ENCODE measurements at regions of chr20 and their contacts with region 1.

Region 1: GRCh38 chr20:48422242-48422955 is 405.4 kb downstream of the PREX1 start:
- DNase-seq: no peak

Region 2: DNA sequence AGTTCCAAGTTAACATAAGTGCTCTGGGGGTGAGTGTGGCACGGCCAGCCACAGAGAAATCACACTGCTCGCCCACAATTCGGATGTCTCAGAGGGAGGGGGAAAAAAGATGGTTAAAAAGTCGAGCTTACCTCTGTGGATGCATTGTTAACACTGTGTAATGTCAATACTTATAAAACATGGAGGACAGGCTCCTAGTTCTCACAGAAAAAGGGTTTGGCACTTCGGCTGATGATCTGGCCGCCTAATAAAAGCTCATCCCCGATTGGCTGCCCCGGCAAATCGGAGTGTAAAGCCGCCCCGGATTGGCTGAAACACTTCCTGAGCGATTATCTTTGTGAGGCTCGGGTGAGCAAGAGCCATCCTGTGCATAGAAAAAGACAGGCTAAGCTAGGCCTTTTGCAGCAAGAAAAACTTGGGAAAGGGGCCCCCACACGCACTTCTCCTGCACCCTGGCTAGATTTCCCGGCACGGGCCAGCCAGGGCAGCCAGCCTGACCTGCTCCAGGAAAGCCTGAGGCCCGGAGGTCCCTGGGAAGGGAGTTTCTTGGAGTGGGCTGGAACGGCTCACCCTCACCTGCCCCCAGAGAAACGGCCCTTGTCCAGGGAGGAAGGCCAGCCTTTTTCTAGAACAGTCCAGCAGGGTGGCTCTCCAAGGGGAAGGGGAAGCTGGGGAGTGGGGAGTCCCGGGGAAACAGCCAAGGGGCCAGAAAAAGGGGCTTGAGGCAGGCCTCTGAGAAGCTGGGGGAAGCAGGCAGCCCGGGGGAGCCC is 1065.7 kb before region 1 on chr20 and contains the start of gene ZMYND8:
- intact Hi-C with region 1: no loop called
- DNase-seq: peak; percentile 96
- total RNA-seq, gene ZMYND8: 28.0 to 29.3 TPM

Region 3: DNA sequence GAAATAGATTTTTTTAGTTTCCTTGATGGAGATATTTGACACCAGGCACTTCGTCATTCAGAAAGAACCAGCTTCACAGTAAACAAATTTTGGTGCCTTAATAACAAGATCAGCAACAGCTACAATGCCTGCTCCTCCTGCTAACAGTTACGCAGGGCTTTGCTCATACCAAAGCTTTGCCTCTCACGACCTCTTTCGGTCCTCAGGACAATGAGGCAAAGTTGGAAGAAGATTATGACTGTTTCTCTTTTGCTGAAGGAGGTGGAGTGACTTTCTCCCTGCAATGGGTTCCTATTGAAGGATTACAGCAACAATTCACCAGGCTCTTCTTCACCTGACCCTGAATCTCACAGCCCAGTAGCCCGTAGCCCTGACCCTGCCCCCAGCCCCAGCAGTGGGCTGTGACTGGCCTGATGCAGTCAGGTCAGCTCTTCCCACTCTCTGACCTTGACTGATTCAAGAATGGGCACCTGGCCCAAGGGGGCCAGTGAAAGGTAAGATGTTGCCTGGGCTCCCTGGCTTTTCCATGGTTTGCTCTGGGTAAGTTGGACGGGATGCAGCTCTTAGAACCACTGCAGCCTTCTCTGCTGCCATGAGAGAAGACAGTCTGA is 34.6 kb before region 1 on chr20:
- intact Hi-C with region 1: no loop called
- DNase-seq: no peak

Region 4: DNA sequence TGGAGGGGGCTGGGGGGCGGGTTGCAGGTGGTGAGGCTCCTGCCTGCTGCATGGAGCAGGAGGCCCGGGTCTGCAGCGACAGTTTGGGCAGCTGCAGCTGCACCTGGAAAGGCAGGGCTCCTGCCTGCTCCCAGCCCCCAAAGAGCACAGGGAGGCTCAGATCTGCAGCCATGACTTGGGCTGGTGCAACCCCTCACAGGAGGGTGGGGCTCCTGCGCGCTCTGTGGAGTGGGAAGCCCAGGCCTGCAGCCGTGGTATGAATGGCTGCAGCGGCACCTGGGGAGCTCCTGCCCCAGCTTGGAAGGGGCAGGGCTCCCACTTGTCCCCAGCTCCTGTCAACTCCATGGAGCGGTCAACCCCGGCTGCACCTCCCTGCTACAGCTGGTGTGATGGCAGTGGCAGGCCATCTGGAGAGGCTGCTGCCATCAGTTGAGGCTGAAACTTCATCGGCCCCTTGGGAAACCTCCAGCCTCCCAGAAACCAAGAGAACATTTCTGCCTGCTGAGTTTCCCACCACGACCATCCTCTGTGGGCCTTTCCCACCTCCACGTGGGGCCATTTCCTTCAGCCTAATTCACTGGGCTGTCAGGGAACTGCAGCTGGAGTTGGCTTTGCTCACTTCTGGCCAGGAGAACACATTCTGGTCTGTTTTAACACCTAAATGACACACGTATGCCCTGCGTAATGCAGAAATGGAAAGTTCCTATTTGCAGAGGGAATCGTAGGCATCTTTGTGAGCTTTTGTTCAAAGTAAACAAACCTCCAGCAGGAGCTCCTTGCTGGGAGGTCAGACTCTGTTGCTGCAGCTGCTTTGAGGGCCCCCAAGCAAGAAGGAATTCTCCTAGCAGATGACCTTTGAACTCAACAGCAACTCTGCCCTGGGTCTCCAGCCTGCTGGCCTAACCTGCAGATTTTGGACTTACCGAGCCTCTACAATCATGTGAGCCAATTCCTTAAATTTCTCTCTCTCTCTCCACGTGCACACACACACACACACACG is 23.6 kb before region 1 on chr20:
- intact Hi-C with region 1: loop called in 1 of 2 experiments (anchors 1 kb)
- DNase-seq: no peak

Measured in posterior vena cava (tissue), 2 donors.